PC-9 (cell line): ENCODE measurements at regions of chr17 and their contacts with region 1.

Region 1: GRCh38 chr17:409848-410545 is 57.4 kb upstream of the RPH3AL start:
- DNase-seq: peak; percentile 96 to 100
- H3K4me3 ChIP-seq: peak overlapping the region; percentile 97
- H3K27ac ChIP-seq: no peak overlapping the region
- H3K4me1 ChIP-seq: peaks cover 11% of the 10 kb centered on the region
- H3K27me3 ChIP-seq: no peaks in the 10 kb centered on the region
- CTCF ChIP-seq: no peak

Region 2: DNA sequence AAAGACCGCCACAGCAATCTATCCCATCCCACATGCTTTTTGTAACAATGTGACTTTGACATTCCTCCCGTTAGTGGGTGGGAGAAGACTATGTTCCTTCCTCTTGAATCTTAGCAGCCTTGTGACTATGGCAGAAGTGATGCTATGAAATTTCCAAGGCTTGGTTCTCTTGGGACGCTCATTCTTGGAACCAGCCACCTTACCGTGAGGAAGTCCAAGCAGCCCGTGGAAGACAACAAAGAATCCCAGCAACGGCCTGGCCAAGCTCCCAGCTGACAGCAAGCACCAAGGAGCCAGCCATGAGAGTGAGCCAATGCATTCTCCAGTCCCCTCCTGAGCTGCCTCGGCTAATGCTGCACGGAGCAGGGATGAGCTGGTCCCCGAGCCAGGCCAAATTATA is 242.3 kb after region 1 on chr17:
- CTCF ChIA-PET with region 1: interaction called, 10 read pairs
- POLR2A ChIA-PET with region 1: no interaction called
- intact Hi-C with region 1: no loop called
- DNase-seq: no peak
- H3K4me3 ChIP-seq: no peak overlapping the region
- H3K27ac ChIP-seq: no peak overlapping the region
- H3K4me1 ChIP-seq: no peaks in the 10 kb centered on the region
- H3K27me3 ChIP-seq: no peaks in the 10 kb centered on the region
- CTCF ChIP-seq: no peak

Region 3: DNA sequence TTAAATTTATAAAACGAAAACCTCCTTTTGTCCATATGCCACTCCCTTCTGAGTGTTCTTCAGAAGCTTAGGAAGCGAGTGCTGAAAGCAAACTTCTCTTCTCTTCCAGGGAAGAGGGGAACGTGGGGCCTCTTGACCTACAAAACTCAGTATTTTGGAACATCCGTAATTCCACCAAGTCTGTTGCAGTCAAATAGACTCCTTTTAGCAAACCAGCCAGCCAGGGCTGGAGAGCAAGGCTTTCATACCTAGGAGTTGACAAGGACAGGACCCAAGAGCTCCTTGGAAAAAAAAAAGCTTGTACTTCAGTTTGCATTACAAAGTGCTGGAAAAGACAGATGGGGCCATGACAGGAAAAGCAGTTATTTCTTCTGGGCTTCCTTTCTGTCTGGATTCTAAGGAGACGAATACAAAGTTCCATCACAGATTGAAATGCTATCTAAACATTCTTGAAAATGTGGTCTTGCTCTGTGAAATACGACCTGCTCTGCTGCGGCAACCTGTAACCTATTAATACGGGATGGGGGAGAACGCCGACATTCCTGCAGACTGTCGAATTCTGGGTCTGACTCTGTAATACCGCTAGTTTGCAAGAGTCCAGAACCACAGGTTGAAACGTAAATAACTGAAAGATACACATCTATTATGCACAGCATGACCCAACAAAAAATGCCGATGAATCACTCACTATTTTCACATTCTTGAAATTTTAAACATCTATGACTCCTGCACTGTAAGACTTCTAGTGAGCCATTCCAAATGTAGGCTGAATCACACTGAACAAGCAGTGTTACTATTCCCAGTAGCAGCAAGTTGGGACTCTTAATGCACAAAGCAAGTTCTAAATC is 284.0 kb after region 1 on chr17:
- CTCF ChIA-PET with region 1: interaction called, 18 read pairs
- POLR2A ChIA-PET with region 1: no interaction called
- intact Hi-C with region 1: loop called (anchors 1 kb)
- DNase-seq: peak; percentile 80 to 98
- H3K4me3 ChIP-seq: peak overlapping the region; percentile 31
- H3K27ac ChIP-seq: peak overlapping the region; percentile 84
- H3K4me1 ChIP-seq: peaks cover 52% of the 10 kb centered on the region
- H3K27me3 ChIP-seq: no peaks in the 10 kb centered on the region
- CTCF ChIP-seq: no peak

Region 4: GRCh38 chr17:700504-701094 is 290.6 kb after region 1 on chr17:
- CTCF ChIA-PET with region 1: interaction called, 29 read pairs
- POLR2A ChIA-PET with region 1: no interaction called
- intact Hi-C with region 1: loop called (anchors 1 kb)
- DNase-seq: no peak
- H3K4me3 ChIP-seq: no peak overlapping the region
- H3K27ac ChIP-seq: no peak overlapping the region
- H3K4me1 ChIP-seq: 0 out of 2 replicates have a peak, but pooled peaks cover under 1% of the 10 kb centered on the region
- H3K27me3 ChIP-seq: no peaks in the 10 kb centered on the region
- CTCF ChIP-seq: peak; percentile 91